ENCODE measurements at regions of chr10 and their contacts with region 1.

Region 1: DNA sequence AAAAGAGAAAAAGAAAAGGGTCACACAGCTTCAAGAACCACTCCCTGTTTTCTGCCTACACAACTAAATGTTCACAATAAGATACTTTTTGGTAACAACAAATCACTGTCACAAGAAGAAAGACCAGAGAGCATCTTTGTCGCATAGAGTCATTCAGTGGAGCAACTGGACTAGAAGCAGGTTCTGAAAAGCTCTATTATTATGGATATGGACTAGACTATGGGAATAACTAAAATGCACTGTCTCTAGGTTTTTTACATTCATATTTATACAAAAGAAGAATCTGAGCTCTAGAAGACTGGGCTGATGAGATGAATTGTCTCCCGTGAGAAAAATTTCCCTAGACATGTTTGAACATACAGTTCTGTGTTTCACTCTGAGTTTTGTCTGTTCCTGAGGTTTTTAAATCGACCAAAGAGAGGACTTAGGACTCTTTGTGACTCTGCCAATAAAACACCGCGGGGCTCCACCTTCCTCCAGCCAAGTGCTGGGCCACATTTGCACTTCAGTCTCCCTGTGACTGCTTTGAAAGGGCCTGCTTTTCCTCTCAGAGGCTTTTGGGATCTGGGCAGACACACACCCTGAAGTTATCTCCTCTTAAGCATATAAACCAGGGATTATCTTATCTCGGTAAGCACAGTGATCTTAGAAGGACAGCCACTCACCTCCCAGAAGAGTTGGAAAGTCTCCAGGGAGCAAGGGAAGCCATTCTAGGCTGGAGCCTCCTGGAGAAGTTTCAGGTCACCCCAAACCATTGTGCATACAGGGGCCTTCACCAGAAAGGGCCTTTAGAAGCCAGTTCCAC is 101.0 kb upstream of the JCAD start:
- DNase-seq: no peak
- H3K4me3 ChIP-seq: no peak overlapping the region
- H3K27ac ChIP-seq: no peak overlapping the region
- H3K27me3 ChIP-seq: no peaks in the 10 kb centered on the region
- CTCF ChIP-seq: no peak

Region 2: GRCh38 chr10:29811751-29812449 is 348.5 kb before region 1 on chr10:
- CTCF ChIA-PET with region 1: no interaction called
- POLR2A ChIA-PET with region 1: no interaction called
- DNase-seq: peak; percentile 95
- H3K4me3 ChIP-seq: no peak overlapping the region
- H3K27ac ChIP-seq: peak overlapping the region; percentile 97
- H3K27me3 ChIP-seq: peaks cover 2% of the 10 kb centered on the region
- CTCF ChIP-seq: no peak

Region 3: DNA sequence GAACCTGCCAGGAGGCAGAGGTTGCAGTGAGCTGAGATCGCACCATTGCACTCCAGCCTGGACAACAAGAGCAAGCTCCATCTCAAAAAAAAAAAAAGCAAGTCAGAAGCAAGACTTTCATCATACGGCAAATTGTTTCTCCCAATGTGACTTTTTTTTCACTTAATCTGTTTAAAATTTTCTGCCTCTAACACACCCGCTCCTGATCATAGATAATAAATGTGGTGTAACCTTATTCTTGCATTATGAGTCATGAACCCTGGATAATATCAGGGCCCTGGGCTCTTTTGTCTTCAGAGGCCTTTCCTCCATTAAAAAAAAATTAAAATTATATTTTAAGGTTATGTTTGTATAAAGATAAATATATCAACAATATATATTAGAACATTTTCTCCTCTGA is 10.4 kb after region 1 on chr10:
- CTCF ChIA-PET with region 1: no interaction called
- POLR2A ChIA-PET with region 1: no interaction called
- DNase-seq: no peak
- H3K4me3 ChIP-seq: no peak overlapping the region
- H3K27ac ChIP-seq: no peak overlapping the region
- H3K27me3 ChIP-seq: no peaks in the 10 kb centered on the region
- CTCF ChIP-seq: no peak

Region 4: DNA sequence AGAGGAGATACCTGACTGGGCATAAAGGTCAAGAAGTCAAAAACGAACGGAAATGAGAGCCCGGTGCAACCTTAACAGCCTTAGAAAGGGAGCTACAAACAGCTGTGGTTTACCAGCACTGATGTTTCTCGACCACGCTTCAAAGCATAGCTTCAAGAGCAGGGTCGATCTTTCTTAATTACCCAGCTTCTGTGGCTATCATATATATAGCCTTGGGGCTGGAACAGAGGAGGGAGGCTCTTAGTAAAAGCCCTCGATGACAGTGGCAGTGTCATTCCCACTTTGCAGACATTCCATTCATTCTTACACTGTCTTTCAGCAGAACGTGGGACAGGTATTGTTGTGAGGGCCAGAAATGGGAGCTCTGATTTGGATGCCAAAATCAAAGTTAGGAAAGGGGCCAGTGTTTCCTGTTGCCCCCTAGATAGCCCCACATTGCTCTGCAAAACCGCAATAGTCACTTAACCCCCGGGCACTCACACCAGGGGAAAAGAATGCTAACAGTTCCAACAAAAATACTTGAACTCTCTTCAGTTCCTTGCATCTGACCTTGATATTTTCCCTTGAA is 47.2 kb after region 1 on chr10:
- CTCF ChIA-PET with region 1: no interaction called
- POLR2A ChIA-PET with region 1: interaction called, 10 read pairs
- DNase-seq: no peak
- H3K4me3 ChIP-seq: no peak overlapping the region
- H3K27ac ChIP-seq: no peak overlapping the region
- H3K27me3 ChIP-seq: peaks cover 2% of the 10 kb centered on the region
- CTCF ChIP-seq: no peak